Right ventricle myocardium superior (tissue), 1 donor: ENCODE measurements at regions of chr4 and their contacts with region 1.

Region 1: DNA sequence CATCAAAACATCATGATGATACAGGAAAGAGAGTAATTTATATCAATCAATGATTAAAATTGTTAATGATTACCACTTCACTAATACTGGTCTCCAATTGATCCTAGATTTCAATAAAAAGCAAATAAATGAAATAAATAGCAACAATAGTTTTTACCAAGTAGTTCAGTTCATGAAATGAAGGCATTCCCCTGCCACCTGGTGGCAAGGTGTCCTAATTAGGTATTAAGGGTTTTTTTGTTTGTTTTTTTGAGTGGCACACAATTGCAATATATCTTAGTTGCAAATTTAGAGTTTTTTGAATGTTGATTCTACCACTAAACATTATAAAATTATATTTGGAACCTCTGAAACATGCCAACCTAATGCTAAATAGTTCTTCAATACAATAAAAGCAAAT is 157.4 kb upstream of the PDE5A start:
- DNase-seq: no peak
- ATAC-seq: no peak

Region 2: DNA sequence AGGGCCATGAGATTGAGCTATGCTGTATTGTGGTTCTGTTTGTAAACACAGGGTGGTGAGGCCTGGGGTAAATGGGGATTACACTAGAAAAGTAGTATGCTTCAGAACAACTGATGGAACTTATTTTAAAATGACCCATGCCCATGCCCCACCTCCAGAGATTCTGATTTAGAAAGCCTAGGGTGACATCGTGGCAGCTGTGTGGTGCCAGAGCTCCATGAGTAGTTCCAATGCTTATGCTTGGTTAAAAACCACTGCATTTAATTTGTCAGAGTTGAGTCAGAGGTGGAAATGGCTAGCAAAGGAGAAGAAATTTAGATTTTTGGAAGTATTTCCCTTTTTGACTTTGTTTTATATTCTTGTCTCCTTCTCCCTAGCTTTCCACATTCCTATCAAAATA is 94.0 kb before region 1 on chr4:
- intact Hi-C with region 1: loop called (anchors 10 kb)
- DNase-seq: no peak
- ATAC-seq: peak; percentile 77

Region 3: DNA sequence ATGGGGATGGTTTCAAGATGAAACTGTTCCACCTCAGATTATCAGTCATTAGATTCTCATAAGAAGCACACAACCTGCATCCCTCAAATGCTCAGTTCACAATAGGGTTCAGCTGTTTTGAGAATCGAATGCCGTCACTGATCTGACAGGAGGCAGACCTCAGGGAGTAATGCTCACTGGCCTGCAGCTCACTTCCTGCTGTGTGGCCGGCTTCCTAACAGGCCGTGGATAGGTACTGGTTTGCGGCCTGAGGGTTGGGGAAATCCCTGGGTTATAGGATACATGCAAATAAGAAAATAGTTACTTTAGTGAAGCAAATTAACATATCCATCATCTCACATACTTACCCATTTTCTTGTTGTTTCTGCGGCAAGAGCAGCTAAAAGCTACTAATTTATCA is 120.3 kb after region 1 on chr4:
- intact Hi-C with region 1: no loop called
- DNase-seq: no peak
- ATAC-seq: no peak

Region 4: DNA sequence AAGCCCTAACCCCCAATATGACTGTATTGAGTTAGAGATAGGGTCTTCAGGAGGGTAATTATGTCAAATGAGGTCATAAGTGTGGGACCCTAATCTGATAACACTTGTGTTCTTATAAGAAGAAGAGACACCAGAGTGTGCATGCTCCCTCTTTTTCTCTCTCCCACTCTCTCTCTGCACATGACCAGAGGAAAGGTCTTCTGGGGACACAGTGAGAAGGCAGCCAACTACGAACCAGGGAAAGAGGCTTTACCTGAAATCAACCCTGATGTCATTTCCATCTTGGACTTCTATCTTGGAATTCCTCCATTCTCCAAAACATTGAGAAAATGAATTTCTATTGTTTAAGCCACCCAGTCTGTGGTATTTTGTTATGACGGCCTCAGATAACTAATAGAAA is 377.9 kb after region 1 on chr4:
- intact Hi-C with region 1: no loop called
- DNase-seq: no peak
- ATAC-seq: peak; percentile 48

Region 5: DNA sequence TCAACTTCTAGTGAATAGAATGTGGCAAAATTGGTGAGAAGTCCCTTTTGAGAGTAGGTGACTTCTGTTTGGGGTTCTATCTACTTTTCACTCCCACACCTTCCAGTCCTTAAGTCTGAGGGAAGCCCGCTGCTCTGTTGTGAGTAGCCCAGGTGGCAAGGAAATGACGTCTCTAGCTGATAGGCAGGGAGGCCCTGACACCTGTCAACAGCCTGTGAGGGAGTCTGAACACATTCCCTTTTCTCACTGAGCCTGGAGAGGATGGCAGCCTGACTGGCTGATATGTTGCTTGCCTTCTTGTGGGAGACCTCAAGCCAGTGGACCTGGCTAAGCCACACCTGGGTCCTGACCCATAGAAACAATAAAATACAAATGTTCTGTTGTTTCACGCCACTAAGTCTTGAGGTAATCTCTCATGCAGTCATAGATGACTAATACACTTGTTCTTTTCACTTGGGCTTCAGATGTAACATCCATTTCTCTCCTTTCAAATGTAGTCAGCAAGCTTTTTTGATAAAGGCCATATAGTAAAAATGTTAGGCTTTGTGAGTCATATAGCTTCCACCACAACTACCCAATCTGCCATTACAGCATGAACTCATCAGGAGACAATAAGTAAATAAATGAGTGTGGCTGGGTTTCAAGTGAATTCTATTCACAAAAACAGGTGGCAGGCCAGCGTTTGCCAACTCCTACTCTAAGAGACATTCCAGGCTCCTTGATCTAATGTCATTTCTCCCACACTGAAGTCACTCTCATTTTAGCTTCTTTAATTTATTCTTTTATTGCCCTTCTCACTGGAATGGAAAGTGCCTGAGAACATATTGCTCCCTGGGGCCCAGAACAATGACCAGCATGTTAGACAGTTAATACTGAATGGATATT is 545.8 kb after region 1 on chr4:
- intact Hi-C with region 1: no loop called
- DNase-seq: no peak
- ATAC-seq: no peak